Psoas muscle (tissue), 8 donors: ENCODE measurements at regions of chr1 and their contacts with region 1.

Region 1: DNA sequence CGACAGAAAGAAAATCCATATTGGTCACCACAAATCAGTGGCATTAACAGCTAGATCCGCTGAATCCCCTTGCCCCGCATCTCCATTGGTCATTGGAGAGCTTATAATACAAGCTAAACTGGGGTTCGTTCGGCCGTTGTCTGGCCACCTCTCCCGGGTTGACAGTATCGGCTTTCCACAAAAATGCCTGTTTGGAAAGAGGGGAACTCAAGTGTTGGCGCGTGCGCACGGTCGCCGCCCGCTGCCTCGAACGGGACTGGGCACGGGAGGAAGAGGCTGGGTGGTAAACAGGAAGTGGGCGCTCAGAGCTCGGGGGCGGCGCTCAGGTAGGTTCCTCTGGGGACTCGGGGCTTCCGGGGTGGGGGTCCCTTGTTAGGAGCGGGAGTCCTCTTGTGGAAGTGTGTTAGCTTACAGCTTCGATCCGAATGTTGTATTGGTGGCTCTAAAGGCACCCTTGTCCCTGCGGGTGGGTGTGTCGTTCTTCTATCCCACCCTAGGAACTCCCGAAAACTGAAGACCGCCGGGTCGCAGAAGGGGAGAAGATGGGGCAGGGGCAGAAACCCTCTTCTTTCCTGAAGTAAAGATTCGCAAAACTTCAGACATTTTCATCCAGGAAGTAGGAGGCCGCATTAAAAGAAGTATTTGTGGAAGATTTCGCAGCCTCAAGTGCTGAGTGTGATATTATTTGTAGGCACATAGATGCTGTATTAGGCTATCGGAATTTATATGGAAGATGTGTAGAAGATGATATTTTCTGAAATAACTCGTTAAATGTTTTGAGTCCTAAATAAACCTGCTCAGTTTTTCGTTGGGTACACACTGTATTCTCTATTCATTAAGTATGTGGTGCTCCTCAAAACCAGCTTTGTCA is 962 bp downstream of the BROX start:
- DNase-seq: peak; percentile 93 to 96
- ATAC-seq: peak; percentile 86 to 88 (median 88)
- H3K4me3 ChIP-seq: peak overlapping the region; percentile 88
- H3K27ac ChIP-seq: peak overlapping the region; percentile 99
- H3K4me1 ChIP-seq: peaks cover 21% of the 10 kb centered on the region
- H3K27me3 ChIP-seq: no peaks in the 10 kb centered on the region
- CTCF ChIP-seq: no peak

Region 2: GRCh38 chr1:222643938-222644635 is 69.2 kb before region 1 on chr1:
- intact Hi-C with region 1: loop called in 1 of 2 experiments (anchors 5 kb)
- DNase-seq: peak; percentile 98 to 99
- ATAC-seq: peak; percentile 99 to 100 (median 100)
- H3K4me3 ChIP-seq: peak overlapping the region; percentile 93
- H3K27ac ChIP-seq: peak overlapping the region; percentile 97
- H3K4me1 ChIP-seq: peaks cover 10% of the 10 kb centered on the region
- H3K27me3 ChIP-seq: no peaks in the 10 kb centered on the region
- CTCF ChIP-seq: no peak

Region 3: DNA sequence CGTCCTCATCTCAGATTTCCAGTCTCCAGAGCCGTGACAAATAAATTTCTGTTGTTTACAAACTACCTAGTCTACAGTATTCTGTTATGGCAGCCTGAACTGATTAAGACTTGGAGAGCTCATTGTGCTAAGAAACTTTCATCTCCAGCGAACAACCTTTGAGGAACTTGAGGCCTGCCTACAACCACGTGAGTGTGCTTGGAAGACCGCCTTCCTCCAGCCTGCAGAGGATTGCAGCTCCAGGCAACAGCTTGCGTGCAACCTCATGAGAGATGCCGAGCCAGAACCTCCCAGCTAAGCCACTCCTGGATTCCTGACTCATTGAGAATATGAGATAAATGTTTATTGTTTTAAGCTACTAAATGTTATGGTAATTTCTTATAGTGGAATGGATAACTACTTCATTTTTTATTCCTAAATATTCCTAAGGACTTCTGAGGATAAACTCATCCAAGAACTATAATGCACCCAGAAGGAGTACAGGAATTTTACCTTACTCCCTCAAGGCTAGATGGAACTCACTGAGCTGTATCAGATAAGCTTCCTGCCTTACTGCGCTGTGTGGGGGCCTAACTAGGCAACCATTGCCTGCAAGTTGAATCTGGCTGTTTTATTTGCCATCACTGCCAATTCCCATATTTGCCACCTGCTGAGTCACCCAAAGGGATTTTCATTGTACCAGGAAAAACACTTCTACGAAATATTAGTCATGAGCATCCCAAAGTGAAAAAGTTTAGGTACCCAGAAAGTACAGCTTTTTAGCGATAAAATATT is 41.2 kb after region 1 on chr1:
- intact Hi-C with region 1: no loop called
- DNase-seq: peak; percentile 36 to 71
- ATAC-seq: peak in 3 of 4 donors; percentile 34 to 57 (median 49)
- H3K4me3 ChIP-seq: no peak overlapping the region
- H3K27ac ChIP-seq: no peak overlapping the region
- H3K4me1 ChIP-seq: no peaks in the 10 kb centered on the region
- H3K27me3 ChIP-seq: no peaks in the 10 kb centered on the region
- CTCF ChIP-seq: no peak